CD8-positive, alpha-beta T cell (primary cell): ENCODE measurements at regions of chr12 and their contacts with region 1.

Region 1: GRCh38 chr12:122793685-122794106 is 19.3 kb downstream of the CCDC62 start:
- DNase-seq: peak in 4 of 9 experiments; percentile 10 to 74 (median 58)
- ATAC-seq: peak; percentile 62
- H3K4me3 ChIP-seq: no peak overlapping the region
- H3K4me3 Mint-ChIP-seq: no peak overlapping the region
- H3K27ac ChIP-seq: no peak overlapping the region
- H3K27ac Mint-ChIP-seq: no peak overlapping the region
- H3K4me1 ChIP-seq: no peaks in the 10 kb centered on the region
- H3K4me1 Mint-ChIP-seq: peaks cover 3% of the 10 kb centered on the region
- H3K27me3 ChIP-seq: no peaks in the 10 kb centered on the region
- H3K27me3 Mint-ChIP-seq: no peaks in the 10 kb centered on the region
- CTCF ChIP-seq: peak; percentile 80

Region 2: GRCh38 chr12:122819209-122819785 is 25.6 kb after region 1 on chr12:
- CTCF ChIA-PET with region 1: interaction called, 11 read pairs
- POLR2A ChIA-PET with region 1: no interaction called
- intact Hi-C with region 1: no loop called
- DNase-seq: no peak
- ATAC-seq: no peak
- H3K4me3 ChIP-seq: no peak overlapping the region
- H3K4me3 Mint-ChIP-seq: no peak overlapping the region
- H3K27ac ChIP-seq: no peak overlapping the region
- H3K27ac Mint-ChIP-seq: no peak overlapping the region
- H3K4me1 ChIP-seq: no peaks in the 10 kb centered on the region
- H3K4me1 Mint-ChIP-seq: no peaks in the 10 kb centered on the region
- H3K27me3 ChIP-seq: no peaks in the 10 kb centered on the region
- H3K27me3 Mint-ChIP-seq: no peaks in the 10 kb centered on the region
- CTCF ChIP-seq: no peak

Region 3: GRCh38 chr12:122834104-122834920 is 40.6 kb after region 1 on chr12:
- CTCF ChIA-PET with region 1: interaction called, 16 read pairs
- POLR2A ChIA-PET with region 1: interaction called, 5 read pairs
- intact Hi-C with region 1: loop called (anchors 1 to 2 kb)
- DNase-seq: peak in 3 of 9 experiments; percentile 22 to 56 (median 44)
- ATAC-seq: peak; percentile 15
- H3K4me3 ChIP-seq: peak overlapping the region; percentile 40 to 42
- H3K4me3 Mint-ChIP-seq: peak overlapping the region; percentile 91
- H3K27ac ChIP-seq: no peak overlapping the region
- H3K27ac Mint-ChIP-seq: peak overlapping the region; percentile 94
- H3K4me1 ChIP-seq: peaks cover 20% of the 10 kb centered on the region
- H3K4me1 Mint-ChIP-seq: peaks cover 42% of the 10 kb centered on the region
- H3K27me3 ChIP-seq: no peaks in the 10 kb centered on the region
- H3K27me3 Mint-ChIP-seq: no peaks in the 10 kb centered on the region
- CTCF ChIP-seq: no peak

Region 4: GRCh38 chr12:122865268-122866231 is 71.9 kb after region 1 on chr12:
- CTCF ChIA-PET with region 1: interaction called, 32 read pairs
- POLR2A ChIA-PET with region 1: interaction called, 6 read pairs
- intact Hi-C with region 1: loop called (anchors 1 to 2 kb)
- DNase-seq: peak in 3 of 9 experiments; percentile 44 to 56 (median 55)
- ATAC-seq: peak; percentile 48
- H3K4me3 ChIP-seq: no peak overlapping the region
- H3K4me3 Mint-ChIP-seq: no peak overlapping the region
- H3K27ac ChIP-seq: no peak overlapping the region
- H3K27ac Mint-ChIP-seq: no peak overlapping the region
- H3K4me1 ChIP-seq: peaks cover 5% of the 10 kb centered on the region
- H3K4me1 Mint-ChIP-seq: peaks cover 5% of the 10 kb centered on the region
- H3K27me3 ChIP-seq: no peaks in the 10 kb centered on the region
- H3K27me3 Mint-ChIP-seq: no peaks in the 10 kb centered on the region
- CTCF ChIP-seq: no peak

Region 5: DNA sequence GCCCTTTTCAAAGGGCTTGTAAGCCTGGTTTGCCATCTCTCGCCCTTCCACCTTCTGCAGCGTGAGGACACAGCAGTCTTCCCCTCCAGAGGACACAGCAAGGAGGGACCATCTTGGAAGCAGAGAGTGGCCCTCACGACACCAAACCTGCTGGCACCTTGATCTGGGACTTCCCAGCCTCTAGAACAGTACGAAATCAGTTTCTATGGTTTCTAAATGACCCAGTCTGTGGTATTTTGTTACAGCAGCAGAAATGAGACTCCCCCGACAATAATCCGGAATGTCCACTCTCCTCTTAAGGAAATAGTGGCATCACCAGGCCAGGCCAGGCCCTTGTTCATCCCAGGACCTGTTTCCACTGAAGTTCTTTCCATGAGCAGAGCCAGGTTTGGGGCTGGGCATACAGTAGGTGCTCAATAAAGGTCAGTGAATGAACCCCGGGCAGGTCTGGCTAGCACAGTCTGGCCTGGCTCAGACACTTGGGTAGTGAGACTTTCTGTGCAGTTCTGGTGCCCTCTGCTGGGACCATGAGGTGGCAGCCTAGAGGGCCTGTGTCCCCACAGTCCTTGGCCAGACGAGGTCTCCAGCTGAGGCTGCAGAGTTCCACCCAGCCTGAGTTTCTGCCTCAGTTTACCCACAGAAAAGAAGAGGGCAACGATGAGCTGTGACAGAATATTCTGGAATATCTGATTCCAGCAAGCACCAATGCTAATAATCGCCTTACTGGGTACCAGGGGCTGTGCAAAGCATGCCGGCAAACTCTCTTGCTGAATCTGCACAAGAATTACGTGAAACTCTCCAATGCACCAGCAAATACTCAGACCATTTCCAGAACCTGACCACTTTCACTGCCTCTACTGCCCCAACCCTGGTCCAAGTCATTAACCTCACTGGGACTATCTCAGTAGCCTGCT is 158.5 kb after region 1 on chr12:
- CTCF ChIA-PET with region 1: interaction called, 49 read pairs
- POLR2A ChIA-PET with region 1: no interaction called
- intact Hi-C with region 1: loop called (anchors 1 kb)
- DNase-seq: peak; percentile 50 to 85 (median 76)
- ATAC-seq: peak; percentile 99
- H3K4me3 ChIP-seq: no peak overlapping the region
- H3K4me3 Mint-ChIP-seq: no peak overlapping the region
- H3K27ac ChIP-seq: no peak overlapping the region
- H3K27ac Mint-ChIP-seq: peak overlapping the region; percentile 45
- H3K4me1 ChIP-seq: peaks cover 6% of the 10 kb centered on the region
- H3K4me1 Mint-ChIP-seq: peaks cover 4% of the 10 kb centered on the region
- H3K27me3 ChIP-seq: no peaks in the 10 kb centered on the region
- H3K27me3 Mint-ChIP-seq: no peaks in the 10 kb centered on the region
- CTCF ChIP-seq: peak; percentile 91